Activated T-helper 1 cell treated with anti-CD3 and anti-CD28 coated beads, Interleukin-12 subunit alpha, Interleukin-12 subunit beta, Interleukin-2, Interleukin-4 antibody, amounts not matched to agents 30 ng/mL and 10 ng/mL and 1 ng/mL, durations not matched to agents 14 hours and 24 hours and 36 hours (primary cell): ENCODE measurements at regions of chr3 and their contacts with region 1.

Region 1: GRCh38 chr3:150787741-150788370 is 24.9 kb upstream of the SIAH2 start:
- DNase-seq: peak; percentile 61
- H3K4me3 Mint-ChIP-seq: peak overlapping the region; percentile 43
- H3K27ac Mint-ChIP-seq: no peak overlapping the region
- H3K4me1 Mint-ChIP-seq: peaks cover 52% of the 10 kb centered on the region
- H3K27me3 Mint-ChIP-seq: peaks cover 6% of the 10 kb centered on the region

Region 2: GRCh38 chr3:150681057-150681456 is 106.8 kb before region 1 on chr3:
- intact Hi-C with region 1: loop called (anchors 1 kb)
- DNase-seq: no peak
- H3K4me3 Mint-ChIP-seq: no peak overlapping the region
- H3K27ac Mint-ChIP-seq: peak overlapping the region; percentile 7
- H3K4me1 Mint-ChIP-seq: peaks cover 24% of the 10 kb centered on the region
- H3K27me3 Mint-ChIP-seq: peaks cover 4% of the 10 kb centered on the region

Region 3: DNA sequence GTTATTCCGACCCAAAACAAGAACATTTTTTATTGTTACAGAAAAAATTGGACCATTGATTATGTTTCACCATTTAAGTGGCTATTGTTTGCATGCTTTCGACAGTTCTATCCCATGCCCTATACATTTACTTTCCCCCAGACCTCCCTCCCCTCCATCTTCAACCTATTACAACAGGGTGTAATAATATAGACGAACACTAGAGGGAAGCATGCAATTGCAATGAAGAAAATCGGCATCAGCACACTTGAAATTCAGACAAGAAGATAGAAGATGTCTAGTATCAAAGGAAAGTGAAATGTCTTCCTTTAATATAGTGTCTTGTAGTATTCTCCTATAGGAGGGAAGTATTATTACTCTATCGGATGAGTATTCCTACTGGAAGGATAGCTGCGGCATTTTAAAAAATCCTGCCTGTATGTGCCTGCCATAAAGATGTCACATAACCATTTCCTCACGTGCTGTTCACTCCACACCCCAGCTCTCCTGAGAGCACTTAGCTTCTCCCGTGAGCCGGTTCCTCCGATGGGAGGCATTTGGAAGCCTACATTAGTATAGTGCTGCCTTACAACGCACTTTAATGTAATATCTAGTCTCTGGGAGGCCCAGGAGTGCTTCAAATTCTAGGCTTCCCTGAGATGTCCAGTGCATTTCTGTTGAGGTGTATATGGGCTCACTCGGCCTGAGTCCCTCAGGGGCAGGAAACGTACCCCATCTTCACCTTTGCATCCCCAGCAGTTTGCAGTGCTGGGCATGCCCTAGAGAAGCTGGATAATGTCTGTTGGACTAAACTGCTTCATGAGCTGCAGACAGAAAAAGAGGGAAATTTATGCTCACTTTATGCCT is 66.3 kb before region 1 on chr3:
- intact Hi-C with region 1: loop called (anchors 1 kb)
- DNase-seq: no peak
- H3K4me3 Mint-ChIP-seq: no peak overlapping the region
- H3K27ac Mint-ChIP-seq: no peak overlapping the region
- H3K4me1 Mint-ChIP-seq: peaks cover 46% of the 10 kb centered on the region
- H3K27me3 Mint-ChIP-seq: no peaks in the 10 kb centered on the region

Region 4: DNA sequence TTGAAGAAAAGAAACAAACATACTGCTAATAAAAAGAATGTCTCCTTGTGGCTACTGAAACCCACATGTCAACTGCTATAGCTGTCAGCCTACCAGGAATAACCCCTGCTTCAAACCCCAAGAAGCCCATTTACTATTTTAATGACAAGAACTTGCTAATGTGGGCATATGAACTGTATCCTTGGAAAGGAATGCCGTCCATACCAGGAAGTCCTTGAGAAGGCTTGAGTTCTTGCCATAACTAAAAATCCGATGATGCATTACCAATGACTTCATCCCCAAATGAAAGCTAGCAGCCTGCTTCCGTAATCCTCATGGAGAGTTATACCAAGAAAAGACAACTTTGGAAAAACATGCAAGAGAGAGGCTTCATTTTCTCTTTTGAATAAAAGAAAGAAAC is 82.5 kb after region 1 on chr3:
- intact Hi-C with region 1: loop called (anchors 1 kb)
- DNase-seq: no peak
- H3K4me3 Mint-ChIP-seq: no peak overlapping the region
- H3K27ac Mint-ChIP-seq: no peak overlapping the region
- H3K4me1 Mint-ChIP-seq: peaks cover 2% of the 10 kb centered on the region
- H3K27me3 Mint-ChIP-seq: peaks cover 12% of the 10 kb centered on the region

Region 5: GRCh38 chr3:150956376-150956775 is 168.5 kb after region 1 on chr3:
- intact Hi-C with region 1: no loop called
- DNase-seq: no peak
- H3K4me3 Mint-ChIP-seq: no peak overlapping the region
- H3K27ac Mint-ChIP-seq: no peak overlapping the region
- H3K4me1 Mint-ChIP-seq: no peaks in the 10 kb centered on the region
- H3K27me3 Mint-ChIP-seq: peaks cover 17% of the 10 kb centered on the region

Region 6: DNA sequence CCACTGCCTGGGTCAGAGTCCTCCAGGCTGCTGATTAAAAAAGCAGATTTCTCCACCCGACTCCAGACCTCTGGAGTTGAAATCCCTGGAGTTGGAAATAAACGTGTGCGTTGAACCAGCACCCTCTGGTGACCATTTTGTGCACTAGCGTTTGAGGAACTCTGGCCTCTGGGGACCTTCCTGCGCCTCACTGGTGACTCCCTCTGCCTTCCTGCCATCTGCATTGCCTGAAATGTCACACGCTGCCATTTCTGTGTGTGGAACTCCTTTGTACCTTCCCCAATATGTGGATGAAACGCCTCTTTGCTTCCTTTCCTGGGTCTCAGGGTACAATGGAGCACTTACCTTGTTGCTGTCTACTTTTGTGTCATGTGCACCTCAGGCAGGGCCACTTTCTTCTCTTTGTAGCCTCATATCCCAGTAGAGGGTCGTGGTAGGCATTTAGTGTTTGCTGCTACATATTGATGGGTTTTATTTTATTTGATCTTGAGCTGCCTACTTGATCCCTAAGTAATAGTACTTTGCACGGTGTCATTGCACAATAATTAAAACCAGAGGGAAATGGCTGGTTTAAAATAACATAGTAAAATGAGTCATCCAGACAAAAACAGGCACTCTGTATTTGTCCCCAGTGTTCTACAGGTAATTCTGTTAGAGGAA is 358.3 kb after region 1 on chr3:
- intact Hi-C with region 1: loop called (anchors 1 kb)
- DNase-seq: peak; percentile 38
- H3K4me3 Mint-ChIP-seq: no peak overlapping the region
- H3K27ac Mint-ChIP-seq: no peak overlapping the region
- H3K4me1 Mint-ChIP-seq: no peaks in the 10 kb centered on the region
- H3K27me3 Mint-ChIP-seq: peaks cover 14% of the 10 kb centered on the region

Region 7: GRCh38 chr3:151305101-151305750 is 517.4 kb after region 1 on chr3:
- intact Hi-C with region 1: loop called (anchors 5 kb)
- DNase-seq: no peak
- H3K4me3 Mint-ChIP-seq: peak overlapping the region; percentile 5
- H3K27ac Mint-ChIP-seq: peak overlapping the region; percentile 70
- H3K4me1 Mint-ChIP-seq: peaks cover 63% of the 10 kb centered on the region
- H3K27me3 Mint-ChIP-seq: peaks cover 3% of the 10 kb centered on the region